Motor neuron (in vitro differentiated cells): ENCODE measurements at regions of chr4 and their contacts with region 1.

Region 1: DNA sequence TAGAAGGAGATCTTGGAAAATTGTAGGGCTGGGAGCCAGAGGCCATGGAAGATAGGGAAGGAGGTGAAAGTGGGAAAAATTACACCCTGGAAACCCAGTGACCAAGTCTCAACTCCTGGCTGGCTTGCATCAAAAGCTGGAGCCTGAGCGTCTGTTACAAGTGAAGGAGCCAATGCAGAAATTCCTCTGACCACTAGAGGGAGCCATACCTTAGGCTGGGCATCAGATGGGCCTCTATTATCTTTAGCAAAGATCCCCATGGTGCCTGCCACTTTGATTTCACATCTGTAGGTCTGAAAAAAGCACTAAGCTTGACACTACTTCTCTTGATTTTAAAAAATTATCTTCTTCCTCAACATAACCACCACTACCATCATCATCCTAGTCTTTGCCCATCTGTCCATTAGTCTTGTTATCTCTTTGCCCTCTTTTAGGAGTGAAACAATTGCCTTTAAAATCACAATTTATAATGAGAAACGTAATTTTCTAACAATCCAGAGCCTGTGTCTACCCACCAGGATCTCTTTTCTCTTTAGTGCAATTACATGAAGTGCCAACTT is 62.9 kb downstream of the ANAPC4 start:
- ATAC-seq: peak in 7 of 8 experiments; percentile 53 to 90 (median 71)
- H3K4me3 ChIP-seq: no peak overlapping the region
- H3K27ac ChIP-seq: no peak overlapping the region
- H3K4me1 ChIP-seq: no peaks in the 10 kb centered on the region

Region 2: GRCh38 chr4:25767877-25768725 is 328.1 kb after region 1 on chr4:
- in situ Hi-C with region 1: loop called in 7 of 9 experiments (anchors 5 to 25 kb)
- ATAC-seq: peak; percentile 63 to 99 (median 88)
- H3K4me3 ChIP-seq: no peak overlapping the region
- H3K27ac ChIP-seq: no peak overlapping the region
- H3K4me1 ChIP-seq: no peaks in the 10 kb centered on the region